Activated naive CD4-positive, alpha-beta T cell treated with anti-CD3 and anti-CD28 coated beads for 36 hours (primary cell): ENCODE measurements at regions of chr14 and their contacts with region 1.

Region 1: DNA sequence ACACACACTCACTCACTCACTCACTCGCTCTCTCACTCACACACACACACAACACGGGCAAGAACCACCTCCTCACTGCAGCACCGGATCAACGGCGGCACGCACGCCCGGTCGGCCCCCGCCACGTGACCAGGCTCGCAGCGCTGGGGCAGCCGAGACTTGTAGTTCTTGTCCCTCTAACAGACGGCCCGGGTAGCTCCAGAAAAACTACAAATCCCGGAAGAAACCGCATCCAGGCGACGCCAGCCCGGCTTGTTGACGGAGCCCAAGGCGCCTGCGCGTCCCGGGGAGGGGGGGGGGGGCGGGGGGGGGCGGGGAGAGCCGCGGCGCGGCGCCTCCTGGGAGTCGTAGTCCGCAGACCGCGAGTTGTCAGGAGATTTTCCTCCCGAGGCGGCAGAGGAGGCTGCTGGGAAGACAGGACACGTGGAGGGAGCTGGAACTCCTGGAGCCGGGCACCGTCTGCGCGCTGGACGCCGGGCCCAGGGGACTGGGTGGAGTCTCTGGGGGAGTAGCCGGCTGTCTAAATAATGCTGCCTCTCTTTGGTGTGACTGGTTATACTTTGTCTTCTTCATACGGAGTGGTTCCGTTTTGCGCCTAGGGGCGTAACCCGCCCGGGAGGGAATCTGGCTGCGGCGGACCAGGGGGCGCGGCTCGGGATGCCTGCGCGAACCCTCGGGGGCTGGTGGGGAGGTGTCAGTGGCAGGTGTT is at the start of gene MAX:
- DNase-seq: peak; percentile 99
- H3K4me3 Mint-ChIP-seq: peak within 1 kb of the TSS; percentile 87
- H3K27ac Mint-ChIP-seq: peak within 1 kb of the TSS; percentile 91
- H3K4me1 Mint-ChIP-seq: peaks cover 30% of the 10 kb centered on the region
- H3K27me3 Mint-ChIP-seq: no peaks in the 10 kb centered on the region
- total RNA-seq, gene MAX: 67.9 to 75.1 TPM

Region 2: GRCh38 chr14:63641473-63642228 is 1460.9 kb before region 1 on chr14 and contains the start of gene WDR89:
- CTCF ChIA-PET with region 1: no interaction called
- intact Hi-C with region 1: loop called (anchors 10 kb)
- DNase-seq: peak; percentile 98
- H3K4me3 Mint-ChIP-seq: peak within 1 kb of the TSS; percentile 76
- H3K27ac Mint-ChIP-seq: peak within 1 kb of the TSS; percentile 91
- H3K4me1 Mint-ChIP-seq: peaks cover 48% of the 10 kb centered on the region
- H3K27me3 Mint-ChIP-seq: no peaks in the 10 kb centered on the region
- total RNA-seq, gene WDR89: 26.7 to 27.7 TPM

Region 3: DNA sequence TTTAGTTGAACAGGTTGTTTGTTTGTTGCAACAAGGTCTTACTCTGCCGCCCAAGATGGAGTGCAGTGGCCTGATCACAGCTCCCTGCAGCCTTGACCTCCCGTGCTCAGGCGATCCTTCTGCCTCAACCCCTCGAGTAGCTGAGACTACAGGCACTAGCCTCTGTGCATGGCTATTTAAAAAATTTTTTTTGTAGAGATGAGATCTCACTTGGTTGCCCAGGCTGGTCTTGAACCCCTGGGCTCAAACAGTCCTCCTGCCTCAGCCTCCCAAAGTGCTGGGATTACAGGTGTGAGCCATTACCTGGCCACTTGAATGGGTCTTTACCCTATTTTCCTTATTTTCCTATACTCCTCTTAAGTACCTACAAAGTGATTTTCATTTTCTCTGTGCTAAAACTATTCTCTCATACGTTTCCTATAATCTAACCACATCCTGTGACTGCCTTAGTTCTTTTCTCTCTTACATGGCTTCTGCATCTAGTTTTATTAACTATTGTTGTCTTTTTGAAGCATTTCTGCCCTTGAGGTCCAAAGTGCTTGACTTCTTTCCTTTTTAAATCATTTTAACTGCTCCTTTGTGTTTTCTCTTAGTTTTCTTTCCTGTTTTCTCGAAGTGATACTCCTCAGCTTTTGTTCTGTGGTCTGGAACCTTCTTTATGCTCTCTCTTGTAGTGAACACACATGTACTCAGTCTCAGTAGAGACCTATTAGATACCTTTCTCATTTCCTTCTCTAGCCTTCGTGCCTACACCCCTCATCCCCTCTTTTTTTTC is 174.2 kb before region 1 on chr14:
- CTCF ChIA-PET with region 1: no interaction called
- intact Hi-C with region 1: loop called (anchors 1 kb)
- DNase-seq: no peak
- H3K4me3 Mint-ChIP-seq: no peak overlapping the region
- H3K27ac Mint-ChIP-seq: no peak overlapping the region
- H3K4me1 Mint-ChIP-seq: peaks cover 25% of the 10 kb centered on the region
- H3K27me3 Mint-ChIP-seq: no peaks in the 10 kb centered on the region

Region 4: GRCh38 chr14:65206448-65207096 is 104.0 kb after region 1 on chr14:
- CTCF ChIA-PET with region 1: no interaction called
- intact Hi-C with region 1: loop called (anchors 1 kb)
- DNase-seq: peak; percentile 29
- H3K4me3 Mint-ChIP-seq: peak overlapping the region; percentile 6
- H3K27ac Mint-ChIP-seq: peak overlapping the region; percentile 71
- H3K4me1 Mint-ChIP-seq: peaks cover 62% of the 10 kb centered on the region
- H3K27me3 Mint-ChIP-seq: peaks cover 3% of the 10 kb centered on the region

Region 5: DNA sequence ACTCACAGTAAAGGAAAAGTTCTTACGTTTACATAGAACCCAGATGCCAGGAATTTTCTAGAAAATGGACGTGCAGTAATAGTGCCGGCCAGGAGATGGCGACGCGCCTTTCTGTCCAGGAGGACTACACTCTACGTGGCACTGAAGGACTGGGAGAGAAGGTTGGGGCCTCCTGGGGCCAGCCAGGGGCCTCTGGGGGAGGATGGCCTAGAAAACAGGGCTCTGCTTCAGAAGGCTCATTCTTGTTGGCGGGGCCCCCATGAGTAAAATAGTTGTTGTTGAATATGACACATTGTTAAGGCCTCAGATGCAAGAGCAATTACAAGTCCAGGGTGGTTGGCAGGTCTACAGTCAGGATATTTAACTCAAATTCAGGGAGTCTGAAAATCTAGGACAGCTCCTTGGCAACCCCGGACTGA is 119.9 kb after region 1 on chr14:
- CTCF ChIA-PET with region 1: no interaction called
- intact Hi-C with region 1: no loop called
- DNase-seq: peak; percentile 74
- H3K4me3 Mint-ChIP-seq: no peak overlapping the region
- H3K27ac Mint-ChIP-seq: no peak overlapping the region
- H3K4me1 Mint-ChIP-seq: peaks cover 28% of the 10 kb centered on the region
- H3K27me3 Mint-ChIP-seq: no peaks in the 10 kb centered on the region

Region 6: GRCh38 chr14:65336191-65336591 is 233.6 kb after region 1 on chr14:
- CTCF ChIA-PET with region 1: no interaction called
- intact Hi-C with region 1: loop called (anchors 2 kb)
- DNase-seq: peak; percentile 77
- H3K4me3 Mint-ChIP-seq: peak overlapping the region; percentile 72
- H3K27ac Mint-ChIP-seq: peak overlapping the region; percentile 93
- H3K4me1 Mint-ChIP-seq: peaks cover 55% of the 10 kb centered on the region
- H3K27me3 Mint-ChIP-seq: no peaks in the 10 kb centered on the region

Region 7: GRCh38 chr14:66507722-66508546 is 1405.3 kb after region 1 on chr14 and contains the start of gene GPHN:
- CTCF ChIA-PET with region 1: no interaction called
- intact Hi-C with region 1: loop called (anchors 5 kb)
- DNase-seq: peak; percentile 92
- H3K4me3 Mint-ChIP-seq: peak within 1 kb of the TSS; percentile 96
- H3K27ac Mint-ChIP-seq: peak within 1 kb of the TSS; percentile 85
- H3K4me1 Mint-ChIP-seq: peaks cover 28% of the 10 kb centered on the region
- H3K27me3 Mint-ChIP-seq: peaks cover 7% of the 10 kb centered on the region
- total RNA-seq, gene GPHN: 14.2 to 21.4 TPM